MCF 10A (cell line): ENCODE measurements at regions of chr13 and their contacts with region 1.

Region 1: DNA sequence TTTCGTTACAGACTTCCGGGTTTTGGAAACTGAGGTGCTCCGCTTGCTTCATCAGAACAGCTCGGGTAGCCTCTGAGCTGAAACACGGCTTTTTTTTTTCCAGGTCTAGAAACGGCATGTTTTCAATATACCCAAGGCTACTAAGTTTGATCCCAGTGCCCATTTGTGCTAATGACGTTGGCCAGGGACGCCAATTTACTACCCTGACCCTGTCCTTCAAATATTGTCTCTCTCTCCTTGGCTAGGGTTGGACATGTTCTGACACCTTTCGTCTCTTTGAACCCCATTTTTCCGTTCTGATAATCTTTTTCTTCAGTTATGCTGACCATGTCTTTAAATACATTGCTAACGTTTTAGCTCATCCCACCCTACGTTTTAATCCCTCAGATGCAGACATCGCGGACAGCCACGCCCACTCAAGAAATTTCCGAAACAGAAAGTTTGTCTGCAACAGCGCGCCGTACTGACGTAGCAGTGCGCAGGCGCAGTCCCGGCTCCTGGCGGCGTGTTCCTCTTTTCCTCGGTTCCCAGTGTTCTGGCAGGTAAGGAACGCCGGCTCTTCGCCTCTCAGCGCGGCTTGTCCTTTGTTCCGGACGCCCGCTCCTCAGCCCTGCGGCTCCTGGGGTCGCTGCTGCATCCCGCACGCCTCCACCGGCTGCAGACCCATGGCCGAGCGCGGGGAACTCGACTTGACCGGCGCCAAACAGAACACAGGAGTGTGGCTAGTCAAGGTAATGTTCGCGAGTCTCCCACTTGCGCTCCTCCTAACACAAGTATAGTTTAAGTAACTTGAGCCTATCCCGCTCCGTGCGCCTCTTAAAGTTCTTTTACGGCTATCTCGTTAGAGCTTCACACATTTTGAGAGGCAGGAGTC is at the start of gene GTF2F2:
- DNase-seq: peak; percentile 85
- H3K4me3 Mint-ChIP-seq: no peak within 1 kb of the TSS
- H3K27ac Mint-ChIP-seq: no peak within 1 kb of the TSS
- H3K4me1 Mint-ChIP-seq: peaks cover 8% of the 10 kb centered on the region
- H3K27me3 Mint-ChIP-seq: no peaks in the 10 kb centered on the region
- CTCF ChIP-seq: no peak
- total RNA-seq, gene GTF2F2: 41.2 and 47.4 TPM in 2 replicates

Region 2: DNA sequence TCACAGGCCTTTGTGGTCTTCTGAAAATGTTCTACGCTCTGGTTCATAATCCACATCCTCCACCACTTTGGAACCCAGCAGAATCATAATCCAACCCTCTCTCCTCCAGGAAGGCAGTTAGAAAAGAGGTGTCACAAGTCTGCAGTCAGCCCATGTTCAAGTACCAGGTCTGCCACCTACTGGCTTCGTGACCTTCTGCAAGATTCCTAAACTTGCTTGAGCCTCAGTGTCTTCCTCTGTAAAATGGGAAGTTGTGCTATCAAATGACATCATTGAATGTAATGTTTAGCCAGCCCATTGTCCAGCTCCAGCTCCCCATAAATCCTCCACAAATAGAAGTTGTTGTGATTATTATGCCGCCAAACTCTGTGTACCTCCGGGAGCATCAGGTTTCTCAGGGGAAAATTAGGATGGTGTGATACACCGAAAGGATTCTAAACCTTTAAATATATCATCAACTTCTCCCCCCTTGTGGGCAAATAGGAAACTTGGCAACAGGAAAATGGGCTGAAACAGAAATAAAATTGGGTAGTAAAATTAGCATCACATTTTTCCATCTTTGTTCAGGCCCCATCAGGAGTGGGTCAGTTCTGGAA is 240.7 kb before region 1 on chr13:
- CTCF ChIA-PET with region 1: no interaction called
- POLR2A ChIA-PET with region 1: no interaction called
- intact Hi-C with region 1: no loop called
- DNase-seq: peak; percentile 62
- H3K4me3 Mint-ChIP-seq: no peak overlapping the region
- H3K27ac Mint-ChIP-seq: no peak overlapping the region
- H3K4me1 Mint-ChIP-seq: no peaks in the 10 kb centered on the region
- H3K27me3 Mint-ChIP-seq: no peaks in the 10 kb centered on the region
- CTCF ChIP-seq: peak; percentile 45

Region 3: GRCh38 chr13:44969551-44970484 is 150.4 kb before region 1 on chr13:
- CTCF ChIA-PET with region 1: no interaction called
- POLR2A ChIA-PET with region 1: no interaction called
- intact Hi-C with region 1: no loop called
- DNase-seq: peak; percentile 66
- H3K4me3 Mint-ChIP-seq: no peak overlapping the region
- H3K27ac Mint-ChIP-seq: no peak overlapping the region
- H3K4me1 Mint-ChIP-seq: peaks cover 15% of the 10 kb centered on the region
- H3K27me3 Mint-ChIP-seq: no peaks in the 10 kb centered on the region
- CTCF ChIP-seq: peak; percentile 70

Region 4: DNA sequence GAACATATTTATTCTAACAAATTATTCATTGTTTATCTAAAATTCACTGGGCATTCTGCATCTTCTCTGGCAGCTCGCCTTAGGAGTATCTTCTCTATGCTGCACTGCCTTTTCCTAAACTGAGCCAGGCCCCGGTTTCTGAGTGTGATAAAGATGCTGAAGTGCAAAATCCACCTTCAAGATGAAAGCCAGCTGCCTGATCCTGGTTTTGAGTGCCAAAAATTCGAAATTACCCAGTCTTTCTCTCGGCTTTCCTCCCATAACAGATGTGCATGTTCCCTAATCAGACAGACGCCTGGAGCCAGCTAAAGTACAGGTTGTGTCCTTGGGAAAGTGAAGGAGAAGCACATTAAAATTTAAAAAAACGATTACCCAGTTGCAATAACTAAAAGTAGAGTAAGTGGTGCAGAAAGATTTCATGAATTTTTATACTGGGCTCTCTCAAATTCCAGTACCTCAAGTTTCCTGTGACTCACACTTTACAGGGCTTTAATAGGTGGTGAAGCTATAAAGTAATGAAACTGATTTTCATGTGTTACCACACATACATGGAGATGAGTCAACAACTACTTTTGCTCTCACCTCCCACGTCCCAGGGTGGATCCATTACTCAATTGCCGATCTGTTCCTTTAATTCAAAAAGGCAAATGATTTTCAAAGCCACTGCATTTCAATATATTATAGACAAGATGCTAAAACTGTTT is 64.9 kb before region 1 on chr13:
- CTCF ChIA-PET with region 1: interaction called, 3 read pairs
- POLR2A ChIA-PET with region 1: interaction called, 71 read pairs
- intact Hi-C with region 1: loop called (anchors 2 kb)
- DNase-seq: peak; percentile 93
- H3K4me3 Mint-ChIP-seq: peak overlapping the region; percentile 66
- H3K27ac Mint-ChIP-seq: peak overlapping the region; percentile 88
- H3K4me1 Mint-ChIP-seq: peaks cover 14% of the 10 kb centered on the region
- H3K27me3 Mint-ChIP-seq: no peaks in the 10 kb centered on the region
- CTCF ChIP-seq: no peak

Region 5: GRCh38 chr13:45142440-45143345 is 22.5 kb after region 1 on chr13:
- CTCF ChIA-PET with region 1: interaction called, 3 read pairs
- POLR2A ChIA-PET with region 1: interaction called, 46 read pairs
- intact Hi-C with region 1: no loop called
- DNase-seq: no peak
- H3K4me3 Mint-ChIP-seq: no peak overlapping the region
- H3K27ac Mint-ChIP-seq: peak overlapping the region; percentile 78
- H3K4me1 Mint-ChIP-seq: peaks cover 24% of the 10 kb centered on the region
- H3K27me3 Mint-ChIP-seq: no peaks in the 10 kb centered on the region
- CTCF ChIP-seq: no peak

Region 6: DNA sequence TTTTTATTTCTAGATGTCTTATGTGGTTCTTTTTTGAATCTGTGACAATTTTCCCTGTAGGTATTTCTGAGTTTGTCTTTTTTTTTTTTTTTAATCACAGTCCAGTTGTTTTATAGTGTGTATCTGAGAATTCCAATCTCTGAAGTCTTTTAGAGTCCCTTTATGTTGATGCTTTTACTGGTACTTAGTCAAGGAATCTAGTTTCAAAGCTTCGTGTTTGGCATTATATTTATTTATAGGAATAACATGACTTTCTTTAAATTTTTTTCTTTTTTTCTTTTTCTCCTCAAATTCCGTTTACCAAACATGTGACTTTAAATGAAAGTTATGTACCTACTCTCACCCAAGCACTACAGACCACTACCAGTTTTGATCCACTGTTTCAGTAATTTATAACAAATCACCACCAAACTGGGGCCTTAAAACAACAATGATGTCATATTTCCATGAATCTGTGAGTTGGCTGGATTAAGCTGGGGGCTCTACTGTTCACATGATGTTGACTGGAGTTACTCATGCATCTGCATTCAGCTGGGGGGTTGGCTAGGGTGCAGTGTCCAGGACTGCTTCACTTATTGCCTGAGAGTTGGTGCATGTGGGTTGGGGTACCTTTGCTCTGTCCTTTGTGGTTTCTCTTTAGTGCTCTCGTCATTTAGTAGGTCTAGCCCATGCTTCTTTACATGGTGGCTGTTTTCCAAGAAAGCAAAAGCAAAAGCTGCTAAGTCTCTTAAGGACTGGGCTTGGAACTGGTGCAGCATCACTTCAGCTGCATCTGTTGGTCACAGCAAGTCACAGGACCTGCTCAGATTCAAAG is 58.3 kb after region 1 on chr13:
- CTCF ChIA-PET with region 1: interaction called, 3 read pairs
- POLR2A ChIA-PET with region 1: interaction called, 15 read pairs
- intact Hi-C with region 1: no loop called
- DNase-seq: peak; percentile 14
- H3K4me3 Mint-ChIP-seq: no peak overlapping the region
- H3K27ac Mint-ChIP-seq: peak overlapping the region; percentile 11
- H3K4me1 Mint-ChIP-seq: peaks cover 15% of the 10 kb centered on the region
- H3K27me3 Mint-ChIP-seq: no peaks in the 10 kb centered on the region
- CTCF ChIP-seq: no peak

Region 7: DNA sequence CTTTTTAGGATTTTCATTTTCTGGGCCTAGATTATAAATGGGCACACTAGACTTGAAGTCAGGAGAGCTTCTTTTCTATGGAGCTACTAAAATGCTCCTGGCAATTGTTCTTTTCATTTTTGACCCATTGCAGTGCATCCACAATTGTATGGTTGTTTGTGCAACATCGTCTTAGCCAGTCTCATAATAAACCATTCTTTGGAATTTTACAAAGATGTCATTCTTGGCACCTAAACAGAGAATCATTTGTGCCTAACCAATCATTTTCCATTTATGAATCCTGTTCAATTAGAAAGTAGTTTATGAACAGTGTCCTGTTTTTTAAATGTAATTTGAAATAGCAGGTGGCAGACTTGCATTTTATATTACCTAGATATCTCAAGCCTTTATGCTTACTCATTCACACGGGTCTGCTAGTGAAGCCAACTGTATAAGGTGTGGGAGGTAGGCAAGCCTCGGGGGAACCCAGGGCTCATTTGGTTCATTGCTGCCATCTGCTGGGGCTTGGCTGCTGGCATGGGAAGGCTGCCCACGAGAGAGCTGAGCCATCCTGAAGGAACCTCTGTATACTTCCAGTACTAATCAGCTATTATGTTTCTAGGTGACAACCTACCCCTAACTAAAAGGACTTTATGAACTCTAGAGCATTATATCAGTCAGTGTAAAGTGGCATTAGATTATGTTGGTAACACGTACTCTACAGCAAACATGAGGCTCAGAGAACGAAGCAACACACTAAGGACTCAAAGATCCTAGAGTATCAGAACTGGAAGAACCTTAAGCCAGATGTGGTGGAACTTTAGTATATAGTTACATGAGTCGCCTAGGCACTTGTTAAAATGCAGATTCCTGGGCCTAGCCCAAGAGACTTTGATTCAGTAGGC is 160.8 kb after region 1 on chr13:
- CTCF ChIA-PET with region 1: interaction called, 7 read pairs
- POLR2A ChIA-PET with region 1: interaction called, 7 read pairs
- intact Hi-C with region 1: loop called (anchors 1 kb)
- DNase-seq: peak; percentile 92
- H3K4me3 Mint-ChIP-seq: no peak overlapping the region
- H3K27ac Mint-ChIP-seq: no peak overlapping the region
- H3K4me1 Mint-ChIP-seq: peaks cover 5% of the 10 kb centered on the region
- H3K27me3 Mint-ChIP-seq: no peaks in the 10 kb centered on the region
- CTCF ChIP-seq: peak; percentile 83

Region 8: DNA sequence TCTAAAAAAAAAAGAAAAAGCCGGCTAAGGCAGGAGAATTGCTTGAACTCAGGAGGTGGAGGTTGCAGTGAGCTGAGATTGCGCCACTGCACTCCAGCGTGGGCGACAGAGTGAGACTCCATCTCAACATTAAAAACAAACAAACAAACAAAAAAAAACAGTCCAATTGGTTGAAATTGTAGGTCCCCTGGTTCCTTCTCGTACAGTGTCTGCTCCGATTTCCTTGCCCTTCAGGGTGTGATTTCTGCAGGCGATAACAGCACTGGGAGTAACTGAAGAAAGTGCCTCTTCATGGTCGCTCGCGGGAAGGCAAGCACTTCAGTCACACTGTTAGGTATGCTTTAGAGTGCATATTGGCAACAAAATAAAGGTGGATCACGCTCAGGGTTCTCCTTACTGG is 181.0 kb after region 1 on chr13:
- CTCF ChIA-PET with region 1: no interaction called
- POLR2A ChIA-PET with region 1: no interaction called
- intact Hi-C with region 1: no loop called
- DNase-seq: no peak
- H3K4me3 Mint-ChIP-seq: no peak overlapping the region
- H3K27ac Mint-ChIP-seq: no peak overlapping the region
- H3K4me1 Mint-ChIP-seq: no peaks in the 10 kb centered on the region
- H3K27me3 Mint-ChIP-seq: no peaks in the 10 kb centered on the region
- CTCF ChIP-seq: no peak